Endothelial cell of umbilical vein (primary cell): ENCODE measurements at regions of chr3 and their contacts with region 1.

Region 1: DNA sequence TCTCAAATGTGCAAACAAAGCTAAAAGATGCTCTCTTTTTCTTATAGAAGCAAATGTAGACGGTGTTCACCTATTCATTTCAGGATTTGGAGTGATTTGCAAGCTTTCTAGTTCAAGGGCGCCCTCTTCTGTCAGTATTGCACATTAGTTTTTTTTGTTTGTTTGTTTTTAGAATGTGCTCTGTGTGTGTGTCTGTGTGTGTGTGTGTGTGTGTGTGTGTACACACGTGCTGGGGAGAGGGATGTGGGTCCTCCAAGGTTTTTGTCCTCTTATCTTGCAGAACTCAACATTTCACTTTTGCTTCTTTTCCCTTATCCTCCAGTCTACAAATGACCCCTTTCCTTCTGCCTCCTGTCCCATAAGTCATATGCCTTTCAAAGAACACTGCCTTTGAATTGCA is 23.5 kb downstream of the DNAH1 start:
- DNase-seq: peak; percentile 74
- H3K4me3 ChIP-seq: no peak overlapping the region
- H3K27ac ChIP-seq: no peak overlapping the region
- H3K4me1 ChIP-seq: no peaks in the 10 kb centered on the region
- H3K27me3 ChIP-seq: no peaks in the 10 kb centered on the region
- CTCF ChIP-seq: peak; percentile 48 to 50
- POLR2A ChIP-seq: no peak

Region 2: DNA sequence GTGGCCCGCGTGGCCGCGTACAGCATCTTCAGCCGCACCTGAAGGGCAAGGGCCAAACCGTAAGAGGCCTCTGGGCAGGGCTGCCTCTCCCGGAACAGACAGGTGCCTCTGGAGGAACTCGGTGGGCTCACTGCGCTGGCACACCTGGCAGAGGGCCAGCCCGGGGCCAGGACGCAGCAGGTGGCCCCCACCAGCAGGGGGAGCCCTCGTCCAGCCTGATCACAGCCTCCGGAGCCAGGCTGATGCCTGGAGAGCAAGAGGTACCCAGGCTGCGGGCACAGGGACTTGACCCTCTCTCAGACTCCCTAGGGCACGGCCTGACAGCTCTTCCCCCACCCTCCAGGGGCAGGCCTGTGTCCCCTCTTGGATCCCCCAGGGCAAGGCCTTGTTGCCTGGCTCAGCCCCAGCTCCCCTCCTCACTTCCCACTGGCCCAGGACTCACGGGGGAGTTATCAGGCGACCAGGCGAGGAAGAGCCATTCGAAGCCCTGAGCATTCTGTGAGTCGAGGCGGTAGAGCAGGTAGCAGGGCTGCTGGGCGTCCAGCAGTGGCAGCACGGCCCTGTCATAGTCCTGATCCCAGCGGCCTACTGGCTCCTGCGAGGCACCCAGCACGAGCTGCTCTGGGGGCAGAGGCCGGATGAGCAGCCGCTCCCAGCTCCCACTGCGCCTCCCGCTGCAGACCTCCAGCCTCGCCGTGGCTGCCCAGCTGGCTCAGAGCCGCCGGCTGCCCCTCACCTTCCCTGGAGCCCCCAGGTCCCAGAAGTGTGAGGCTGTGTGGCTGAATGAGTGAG is 107.9 kb before region 1 on chr3:
- CTCF ChIA-PET with region 1: interaction called, 91 read pairs
- POLR2A ChIA-PET with region 1: no interaction called
- dilution Hi-C with region 1: no loop called
- intact Hi-C with region 1: loop called (anchors 1 kb)
- DNase-seq: peak; percentile 54
- H3K4me3 ChIP-seq: no peak overlapping the region
- H3K27ac ChIP-seq: no peak overlapping the region
- H3K4me1 ChIP-seq: no peaks in the 10 kb centered on the region
- H3K27me3 ChIP-seq: no peaks in the 10 kb centered on the region
- CTCF ChIP-seq: peak; percentile 98
- POLR2A ChIP-seq: peak; percentile 36

Region 3: DNA sequence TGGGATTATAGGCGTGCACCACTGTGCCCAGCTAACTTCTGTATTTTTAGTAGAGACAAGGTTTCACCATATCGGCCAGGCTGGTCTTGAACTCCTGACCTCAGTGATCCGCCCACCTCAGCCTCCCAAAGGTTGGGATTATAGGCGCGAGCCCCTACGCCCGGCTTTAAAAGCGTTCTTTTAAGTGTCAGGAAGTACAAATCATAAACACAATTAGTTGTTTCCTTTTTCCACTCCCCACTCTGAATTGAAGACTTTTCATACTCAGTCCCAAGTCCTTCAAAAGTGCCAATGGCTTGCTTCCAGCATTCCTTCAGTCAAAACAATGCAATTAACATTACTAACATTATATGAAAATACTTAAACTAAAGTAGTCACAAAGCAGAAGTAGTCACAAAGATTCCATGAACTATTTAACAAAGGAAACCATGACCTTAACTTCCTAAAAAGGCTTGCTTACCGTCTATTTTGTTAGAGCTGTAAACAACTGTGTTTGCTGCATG is 69.3 kb before region 1 on chr3:
- CTCF ChIA-PET with region 1: interaction called, 11 read pairs
- POLR2A ChIA-PET with region 1: no interaction called
- dilution Hi-C with region 1: no loop called
- intact Hi-C with region 1: no loop called
- DNase-seq: peak; percentile 93
- H3K4me3 ChIP-seq: no peak overlapping the region
- H3K27ac ChIP-seq: peak overlapping the region; percentile 66
- H3K4me1 ChIP-seq: peaks cover 38% of the 10 kb centered on the region
- H3K27me3 ChIP-seq: no peaks in the 10 kb centered on the region
- CTCF ChIP-seq: no peak
- POLR2A ChIP-seq: no peak

Region 4: GRCh38 chr3:52291508-52292181 is 48.0 kb before region 1 on chr3:
- CTCF ChIA-PET with region 1: interaction called, 107 read pairs
- POLR2A ChIA-PET with region 1: no interaction called
- dilution Hi-C with region 1: no loop called
- intact Hi-C with region 1: loop called (anchors 1 kb)
- DNase-seq: no peak
- H3K4me3 ChIP-seq: no peak overlapping the region
- H3K27ac ChIP-seq: no peak overlapping the region
- H3K4me1 ChIP-seq: peaks cover 10% of the 10 kb centered on the region
- H3K27me3 ChIP-seq: no peaks in the 10 kb centered on the region
- CTCF ChIP-seq: peak; percentile 47 to 63
- POLR2A ChIP-seq: no peak

Region 5: DNA sequence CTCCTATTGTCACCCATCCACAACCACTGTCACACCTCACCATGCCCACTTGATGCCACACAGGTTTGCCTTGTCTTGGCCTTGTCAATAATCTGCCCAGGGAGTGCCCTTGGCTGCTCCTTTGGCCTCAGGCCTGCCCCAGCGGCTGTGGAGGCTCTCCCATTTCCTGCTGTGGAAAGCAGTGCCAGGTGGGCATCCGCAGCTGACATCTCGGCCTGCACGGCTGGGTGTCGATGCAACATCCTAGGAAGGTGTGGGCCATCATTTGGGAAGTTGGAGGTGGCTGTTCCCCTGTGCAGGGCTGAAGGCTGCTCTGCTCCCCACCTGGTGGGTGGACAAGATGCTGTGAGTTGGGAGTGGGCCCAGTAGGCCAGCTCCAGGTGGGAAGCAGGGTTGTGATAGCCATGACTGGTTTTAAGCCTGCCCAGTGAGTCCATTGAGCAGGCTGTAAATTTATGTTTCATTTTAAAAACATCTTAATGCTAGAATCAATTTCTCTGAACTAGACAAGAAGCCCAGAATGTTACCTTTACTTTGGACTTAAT is 11.0 kb before region 1 on chr3:
- CTCF ChIA-PET with region 1: interaction called, 18 read pairs
- POLR2A ChIA-PET with region 1: no interaction called
- dilution Hi-C with region 1: no loop called
- intact Hi-C with region 1: no loop called
- DNase-seq: no peak
- H3K4me3 ChIP-seq: no peak overlapping the region
- H3K27ac ChIP-seq: no peak overlapping the region
- H3K4me1 ChIP-seq: no peaks in the 10 kb centered on the region
- H3K27me3 ChIP-seq: no peaks in the 10 kb centered on the region
- CTCF ChIP-seq: no peak
- POLR2A ChIP-seq: no peak